ENCODE measurements at regions of chr3 and their contacts with region 1.

Region 1: GRCh38 chr3:69784954-69785514 is 45.8 kb downstream of the MITF start:
- DNase-seq: no peak
- H3K4me3 ChIP-seq: no peak overlapping the region
- H3K27ac ChIP-seq: peak overlapping the region; percentile 58 to 70 (median 64)
- H3K4me1 ChIP-seq: peaks cover 46 to 76% (median 63%) of the 10 kb centered on the region in 4 donors
- H3K27me3 ChIP-seq: no peaks in the 10 kb centered on the region
- CTCF ChIP-seq: no peak
- EP300 ChIP-seq: no peak
- POLR2A ChIP-seq: no peak

Region 2: GRCh38 chr3:69855436-69856162 is 70.6 kb after region 1 on chr3:
- intact Hi-C with region 1: loop called (anchors 10 kb)
- DNase-seq: no peak
- H3K4me3 ChIP-seq: no peak overlapping the region
- H3K27ac ChIP-seq: peak overlapping the region; percentile 31 to 46 (median 40)
- H3K4me1 ChIP-seq: peaks cover 34 to 47% (median 38%) of the 10 kb centered on the region in 4 donors
- H3K27me3 ChIP-seq: no peaks in the 10 kb centered on the region
- CTCF ChIP-seq: peak; percentile 47 to 52 (median 48)
- EP300 ChIP-seq: no peak
- POLR2A ChIP-seq: no peak

Region 3: GRCh38 chr3:69934398-69934797 is 149.4 kb after region 1 on chr3:
- intact Hi-C with region 1: no loop called
- DNase-seq: no peak
- H3K4me3 ChIP-seq: no peak overlapping the region
- H3K27ac ChIP-seq: no peak overlapping the region
- H3K4me1 ChIP-seq: peaks cover 0 to 23% (median 17%) of the 10 kb centered on the region in 4 donors
- H3K27me3 ChIP-seq: no peaks in the 10 kb centered on the region
- CTCF ChIP-seq: no peak
- EP300 ChIP-seq: no peak
- POLR2A ChIP-seq: no peak

Measured in esophagus muscularis mucosa (tissue), 4 donors.